H1 (cell line): ENCODE measurements at regions of chr1 and their contacts with region 1.

Region 1: GRCh38 chr1:223549740-223550139 is 115.8 kb downstream of the CAPN8 start:
- DNase-seq: no peak
- H3K4me3 ChIP-seq: no peak overlapping the region
- H3K27ac ChIP-seq: no peak overlapping the region
- H3K4me1 ChIP-seq: no peaks in the 10 kb centered on the region
- H3K27me3 ChIP-seq: no peaks in the 10 kb centered on the region
- CTCF ChIP-seq: peak in 1 of 3 experiments; percentile 5; a peak in 1 of 4 replicates
- EP300 ChIP-seq: no peak
- POLR2A ChIP-seq: no peak
- RAD21 ChIP-seq: no peak

Region 2: GRCh38 chr1:223500560-223501425 is 48.9 kb before region 1 on chr1:
- CTCF ChIA-PET with region 1: interaction called, 11 read pairs
- POLR2A ChIA-PET with region 1: no interaction called
- DNase-seq: no peak
- H3K4me3 ChIP-seq: no peak overlapping the region
- H3K27ac ChIP-seq: no peak overlapping the region
- H3K4me1 ChIP-seq: peaks cover 0 to 2% (median 0%) of the 10 kb centered on the region in 4 experiments; a peak in 2 of 7 replicates
- H3K27me3 ChIP-seq: no peaks in the 10 kb centered on the region
- CTCF ChIP-seq: no peak
- EP300 ChIP-seq: no peak
- POLR2A ChIP-seq: no peak
- RAD21 ChIP-seq: no peak